ENCODE measurements at regions of chr3 and their contacts with region 1.

Region 1: GRCh38 chr3:176430244-176431037 is 766.8 kb downstream of the TBL1XR1 start:
- DNase-seq: peak in 1 of 2 experiments; percentile 33
- H3K4me3 ChIP-seq: no peak overlapping the region
- H3K4me3 Mint-ChIP-seq: no peak overlapping the region
- H3K27ac Mint-ChIP-seq: no peak overlapping the region
- H3K4me1 ChIP-seq: peaks cover 11% of the 10 kb centered on the region; the same call in 1 of the 2 replicates
- H3K4me1 Mint-ChIP-seq: no peaks in the 10 kb centered on the region
- H3K27me3 ChIP-seq: no peaks in the 10 kb centered on the region
- H3K27me3 Mint-ChIP-seq: no peaks in the 10 kb centered on the region
- CTCF ChIP-seq: peak; percentile 58 to 59

Region 2: GRCh38 chr3:175121225-175121624 is 1309.2 kb before region 1 on chr3:
- CTCF ChIA-PET with region 1: no interaction called
- POLR2A ChIA-PET with region 1: no interaction called
- intact Hi-C with region 1: loop called (anchors 2 kb)
- DNase-seq: peak; percentile 31 to 47
- H3K4me3 ChIP-seq: no peak overlapping the region
- H3K4me3 Mint-ChIP-seq: no peak overlapping the region
- H3K27ac Mint-ChIP-seq: no peak overlapping the region
- H3K4me1 ChIP-seq: no peaks in the 10 kb centered on the region
- H3K4me1 Mint-ChIP-seq: no peaks in the 10 kb centered on the region
- H3K27me3 ChIP-seq: no peaks in the 10 kb centered on the region
- H3K27me3 Mint-ChIP-seq: no peaks in the 10 kb centered on the region
- CTCF ChIP-seq: peak; percentile 27 to 66

Region 3: GRCh38 chr3:176088962-176089383 is 341.5 kb before region 1 on chr3:
- CTCF ChIA-PET with region 1: no interaction called
- POLR2A ChIA-PET with region 1: no interaction called
- intact Hi-C with region 1: loop called (anchors 1 kb)
- DNase-seq: peak in 1 of 2 experiments; percentile 33
- H3K4me3 ChIP-seq: no peak overlapping the region
- H3K4me3 Mint-ChIP-seq: no peak overlapping the region
- H3K27ac Mint-ChIP-seq: no peak overlapping the region
- H3K4me1 ChIP-seq: peaks cover 20% of the 10 kb centered on the region
- H3K4me1 Mint-ChIP-seq: peaks cover 12% of the 10 kb centered on the region
- H3K27me3 ChIP-seq: no peaks in the 10 kb centered on the region
- H3K27me3 Mint-ChIP-seq: no peaks in the 10 kb centered on the region
- CTCF ChIP-seq: no peak